ENCODE measurements at regions of chr3 and their contacts with region 1.

Region 1: GRCh38 chr3:72259755-72260587 is 475.0 kb upstream of the PROK2 start:
- DNase-seq: peak; percentile 46
- H3K4me3 Mint-ChIP-seq: no peak overlapping the region
- H3K27ac Mint-ChIP-seq: peak overlapping the region; percentile 82
- H3K4me1 Mint-ChIP-seq: peaks cover 58% of the 10 kb centered on the region
- H3K27me3 Mint-ChIP-seq: no peaks in the 10 kb centered on the region

Region 2: GRCh38 chr3:71955240-71956068 is 304.5 kb before region 1 on chr3:
- CTCF ChIA-PET with region 1: no interaction called
- intact Hi-C with region 1: loop called (anchors 2 kb)
- DNase-seq: peak; percentile 76
- H3K4me3 Mint-ChIP-seq: no peak overlapping the region
- H3K27ac Mint-ChIP-seq: peak overlapping the region; percentile 1
- H3K4me1 Mint-ChIP-seq: peaks cover 27% of the 10 kb centered on the region
- H3K27me3 Mint-ChIP-seq: no peaks in the 10 kb centered on the region

Region 3: GRCh38 chr3:72100601-72101187 is 159.3 kb before region 1 on chr3:
- CTCF ChIA-PET with region 1: no interaction called
- intact Hi-C with region 1: loop called (anchors 1 kb)
- DNase-seq: peak; percentile 99
- H3K4me3 Mint-ChIP-seq: peak overlapping the region; percentile 79
- H3K27ac Mint-ChIP-seq: peak overlapping the region; percentile 89
- H3K4me1 Mint-ChIP-seq: peaks cover 26% of the 10 kb centered on the region
- H3K27me3 Mint-ChIP-seq: peaks cover 7% of the 10 kb centered on the region

Region 4: GRCh38 chr3:72339116-72340030 is 79.4 kb after region 1 on chr3:
- CTCF ChIA-PET with region 1: no interaction called
- intact Hi-C with region 1: loop called (anchors 1 kb)
- DNase-seq: no peak
- H3K4me3 Mint-ChIP-seq: no peak overlapping the region
- H3K27ac Mint-ChIP-seq: no peak overlapping the region
- H3K4me1 Mint-ChIP-seq: peaks cover 36% of the 10 kb centered on the region
- H3K27me3 Mint-ChIP-seq: no peaks in the 10 kb centered on the region

Region 5: DNA sequence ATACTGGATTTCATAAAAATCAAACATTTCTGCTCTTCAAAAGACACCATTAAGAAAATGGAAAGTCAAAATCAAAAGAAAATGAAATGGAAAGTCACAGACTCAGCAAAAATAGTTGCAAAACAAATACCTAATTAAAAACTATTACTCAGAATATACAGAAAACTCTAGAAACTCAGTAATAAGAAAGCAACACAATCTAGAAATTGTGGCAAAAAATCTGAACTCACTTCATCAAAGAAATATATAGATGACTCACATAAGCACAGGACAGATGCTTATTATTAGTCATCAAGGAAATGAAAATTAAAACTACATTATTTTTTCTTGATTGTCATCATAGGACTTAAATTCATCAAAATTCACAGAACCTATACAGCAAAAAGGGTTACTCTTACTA is 158.3 kb after region 1 on chr3:
- CTCF ChIA-PET with region 1: no interaction called
- intact Hi-C with region 1: loop called (anchors 1 kb)
- DNase-seq: no peak
- H3K4me3 Mint-ChIP-seq: no peak overlapping the region
- H3K27ac Mint-ChIP-seq: no peak overlapping the region
- H3K4me1 Mint-ChIP-seq: peaks cover 59% of the 10 kb centered on the region
- H3K27me3 Mint-ChIP-seq: no peaks in the 10 kb centered on the region

Region 6: DNA sequence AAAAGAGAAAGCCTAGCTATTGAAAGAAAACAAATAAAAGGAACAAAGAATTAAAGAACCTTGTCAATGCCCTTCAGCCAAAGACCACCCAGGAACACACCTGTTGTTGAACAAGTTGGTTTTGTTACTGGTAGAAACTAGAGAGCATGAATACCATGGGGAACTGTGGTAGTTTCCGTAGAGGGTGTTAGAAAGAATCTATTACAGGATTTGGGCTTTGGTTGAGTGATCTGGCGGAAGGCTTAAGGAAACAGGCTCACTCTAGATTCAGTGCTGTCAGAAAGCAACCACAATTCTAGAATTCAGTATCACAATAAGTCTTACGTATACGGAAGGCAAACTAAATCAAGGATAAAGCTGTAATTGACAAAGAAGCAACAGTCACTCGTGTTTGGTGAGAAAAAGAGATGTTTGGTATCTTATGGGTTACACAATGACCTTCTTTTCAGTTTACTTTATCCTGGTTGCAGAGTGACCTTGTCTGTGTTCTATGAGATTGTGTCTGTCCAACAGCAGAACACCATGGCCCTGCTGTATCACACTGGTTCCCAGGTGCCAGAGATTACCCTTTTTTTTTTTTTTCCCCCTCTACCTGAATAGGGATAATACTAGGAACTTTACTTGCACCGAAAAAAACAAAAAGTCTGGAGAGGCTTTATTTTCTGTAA is 322.4 kb after region 1 on chr3:
- CTCF ChIA-PET with region 1: no interaction called
- intact Hi-C with region 1: no loop called
- DNase-seq: no peak
- H3K4me3 Mint-ChIP-seq: no peak overlapping the region
- H3K27ac Mint-ChIP-seq: no peak overlapping the region
- H3K4me1 Mint-ChIP-seq: no peaks in the 10 kb centered on the region
- H3K27me3 Mint-ChIP-seq: no peaks in the 10 kb centered on the region

Measured in activated naive CD4-positive, alpha-beta T cell treated with anti-CD3 and anti-CD28 coated beads for 36 hours (primary cell).